Colonic mucosa (tissue), 4 donors: ENCODE measurements at regions of chr5 and their contacts with region 1.

Region 1: DNA sequence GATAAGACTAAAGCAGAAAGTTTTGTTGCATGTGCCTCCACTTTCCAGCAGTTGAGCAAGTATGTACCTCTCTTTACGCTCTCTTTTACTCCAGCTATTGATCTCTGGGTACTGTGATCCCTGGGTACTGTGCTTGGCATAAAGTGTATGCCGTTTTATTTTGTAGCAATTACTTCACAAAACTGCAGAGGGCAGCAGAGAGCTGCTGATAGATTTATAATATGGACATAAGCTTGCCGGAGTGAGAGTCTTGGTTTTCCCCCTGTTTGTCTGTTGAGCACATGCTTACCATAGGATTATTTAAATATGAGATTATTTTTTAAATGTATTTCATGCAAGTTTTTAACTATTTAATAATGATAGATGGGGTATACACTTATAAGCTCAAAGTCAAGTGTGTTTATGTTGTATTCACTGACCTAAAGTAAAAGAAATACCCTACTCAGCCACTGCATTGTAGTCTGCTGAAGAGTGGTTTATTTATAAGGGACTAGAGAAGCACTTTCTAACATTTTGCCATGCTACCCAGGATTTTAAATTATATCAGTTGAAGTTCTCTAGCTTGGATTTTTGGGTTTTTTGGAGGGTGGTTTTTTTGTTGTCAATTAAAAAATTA is 13.0 kb downstream of the TTC1 start:
- DNase-seq: peak; percentile 79
- H3K4me3 ChIP-seq: no peak overlapping the region
- H3K27ac ChIP-seq: no peak overlapping the region
- H3K4me1 ChIP-seq: no peaks in the 10 kb centered on the region
- H3K27me3 ChIP-seq: no peaks in the 10 kb centered on the region
- CTCF ChIP-seq: peak; percentile 83

Region 2: GRCh38 chr5:160119905-160120266 is 97.9 kb after region 1 on chr5:
- intact Hi-C with region 1: loop called (anchors 5 kb)
- DNase-seq: no peak
- H3K4me3 ChIP-seq: peak overlapping the region; percentile 12
- H3K27ac ChIP-seq: no peak overlapping the region
- H3K4me1 ChIP-seq: no peaks in the 10 kb centered on the region
- H3K27me3 ChIP-seq: no peaks in the 10 kb centered on the region
- CTCF ChIP-seq: peak; percentile 24

Region 3: GRCh38 chr5:160199410-160199911 is 177.5 kb after region 1 on chr5:
- intact Hi-C with region 1: loop called (anchors 5 kb)
- DNase-seq: peak; percentile 75
- H3K4me3 ChIP-seq: peak overlapping the region; percentile 24
- H3K27ac ChIP-seq: no peak overlapping the region
- H3K4me1 ChIP-seq: peaks cover 6% of the 10 kb centered on the region
- H3K27me3 ChIP-seq: no peaks in the 10 kb centered on the region
- CTCF ChIP-seq: peak; percentile 96

Region 4: GRCh38 chr5:160342403-160342941 is 320.5 kb after region 1 on chr5:
- intact Hi-C with region 1: loop called (anchors 5 kb)
- DNase-seq: no peak
- H3K4me3 ChIP-seq: no peak overlapping the region
- H3K27ac ChIP-seq: no peak overlapping the region
- H3K4me1 ChIP-seq: no peaks in the 10 kb centered on the region
- H3K27me3 ChIP-seq: no peaks in the 10 kb centered on the region
- CTCF ChIP-seq: no peak

Region 5: DNA sequence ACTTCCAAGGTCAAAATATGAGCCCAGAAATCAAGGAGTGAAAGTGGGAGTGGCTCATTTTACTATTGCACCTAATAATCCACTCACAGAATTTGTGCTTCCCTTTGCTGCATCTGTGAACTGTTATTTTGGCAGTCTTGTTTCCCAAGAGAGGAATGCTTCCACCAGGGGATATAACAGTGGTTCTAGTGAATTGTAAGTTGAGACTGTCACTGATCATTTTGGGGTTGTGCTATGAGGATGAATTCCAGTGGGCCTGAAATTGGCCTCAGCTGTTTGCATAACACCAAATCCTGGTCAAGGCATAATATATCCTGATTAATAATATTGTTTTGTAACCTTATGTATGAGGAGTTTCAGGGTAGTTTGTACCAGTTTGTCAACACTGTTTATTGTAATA is 363.6 kb after region 1 on chr5:
- intact Hi-C with region 1: loop called (anchors 5 kb)
- DNase-seq: no peak
- H3K4me3 ChIP-seq: no peak overlapping the region
- H3K27ac ChIP-seq: no peak overlapping the region
- H3K4me1 ChIP-seq: no peaks in the 10 kb centered on the region
- H3K27me3 ChIP-seq: no peaks in the 10 kb centered on the region
- CTCF ChIP-seq: no peak